Activated T-helper 2 cell treated with anti-CD3 and anti-CD28 coated beads, Interferon-gamma antibody, Interleukin-2, Interleukin-4, amounts not matched to agents 10 μg/mL and 5 μg/mL and 100 μg/mL, durations not matched to agents 14 hours and 24 hours and 36 hours (primary cell): ENCODE measurements at regions of chr6 and their contacts with region 1.

Region 1: GRCh38 chr6:131627724-131628682 is at the start of gene MED23:
- DNase-seq: peak; percentile 92
- H3K4me3 Mint-ChIP-seq: peak within 1 kb of the TSS; percentile 97
- H3K27ac Mint-ChIP-seq: peak within 1 kb of the TSS; percentile 90
- H3K4me1 Mint-ChIP-seq: peaks cover 21% of the 10 kb centered on the region
- H3K27me3 Mint-ChIP-seq: no peaks in the 10 kb centered on the region
- total RNA-seq, gene MED23: 40.4 and 43.6 TPM in 2 replicates

Region 2: DNA sequence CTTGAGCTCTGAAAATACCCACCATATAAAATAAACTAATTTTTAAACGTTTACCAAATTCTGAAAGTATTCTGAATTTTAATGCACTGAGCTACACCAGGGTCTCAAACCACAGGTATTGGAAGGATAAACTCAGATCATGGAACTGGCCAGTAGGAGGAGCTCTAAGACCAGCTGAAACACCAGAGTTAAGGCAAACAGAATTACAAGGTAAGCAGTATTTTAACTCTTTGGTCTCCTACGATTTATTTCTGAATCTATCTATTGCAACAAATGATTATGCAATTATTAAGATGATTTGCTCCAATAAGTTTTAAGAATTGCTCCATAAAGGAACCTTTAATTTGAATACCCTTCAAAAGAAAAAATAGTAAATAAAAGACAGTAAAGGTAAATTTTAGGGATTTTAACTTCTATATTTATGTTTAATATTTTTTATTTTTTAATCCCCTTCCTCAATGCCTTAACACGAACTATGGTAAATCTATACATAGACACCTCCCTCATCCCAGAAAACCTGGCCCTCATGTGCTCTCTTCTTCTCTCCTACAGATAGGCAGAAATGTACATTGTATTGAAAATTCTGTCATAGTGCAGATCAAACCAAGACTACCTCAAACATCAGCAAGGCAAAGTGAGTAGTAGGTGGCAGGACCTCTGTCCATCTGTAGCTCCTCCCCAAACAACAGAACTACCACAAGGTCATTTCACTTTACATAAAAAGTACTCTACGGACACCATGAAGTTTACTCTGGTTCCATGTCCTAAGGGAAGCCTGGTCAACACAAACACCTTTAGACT is 742.4 kb before region 1 on chr6:
- intact Hi-C with region 1: loop called (anchors 5 kb)
- DNase-seq: peak; percentile 35
- H3K4me3 Mint-ChIP-seq: no peak overlapping the region
- H3K27ac Mint-ChIP-seq: no peak overlapping the region
- H3K4me1 Mint-ChIP-seq: no peaks in the 10 kb centered on the region
- H3K27me3 Mint-ChIP-seq: peaks cover 1% of the 10 kb centered on the region

Region 3: DNA sequence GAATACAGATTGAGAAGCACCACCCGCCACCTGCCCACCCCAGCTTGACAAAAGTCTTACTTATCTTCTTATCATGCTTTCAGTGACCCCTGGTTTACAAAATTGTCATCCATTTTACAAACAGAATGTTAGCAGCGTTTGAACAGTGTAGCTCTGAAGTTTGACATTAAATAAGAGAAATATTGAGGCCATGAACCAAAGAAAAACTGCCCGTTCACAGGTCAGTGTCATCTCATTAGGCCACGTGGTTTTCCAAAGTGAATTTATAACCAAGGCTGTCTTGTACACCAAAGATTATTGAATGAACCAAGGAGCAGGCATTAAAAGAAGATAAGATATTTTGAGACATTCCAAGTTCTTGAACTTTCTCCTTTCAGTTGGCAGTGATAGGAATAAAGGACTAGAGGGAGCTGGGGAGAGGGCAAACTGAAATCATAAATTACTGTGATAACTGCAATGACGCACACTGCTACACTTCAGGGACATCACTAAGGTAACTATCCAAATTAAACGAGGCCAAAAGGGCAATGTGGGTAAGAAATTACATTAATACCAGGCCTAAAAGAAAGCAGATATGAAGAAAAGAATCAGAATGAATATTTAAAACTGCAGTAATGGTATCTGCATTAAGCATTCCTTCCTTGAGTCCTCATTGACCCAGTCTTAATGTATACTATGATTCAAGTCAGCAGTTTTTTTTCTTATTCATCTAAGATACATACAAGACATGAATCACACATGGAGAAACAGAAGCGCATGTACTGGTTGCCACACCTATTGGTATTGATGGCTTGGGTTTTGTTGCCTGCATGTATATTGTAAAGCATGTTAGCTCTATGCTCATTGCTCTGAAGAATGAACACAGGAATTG is 214.8 kb before region 1 on chr6:
- intact Hi-C with region 1: no loop called
- DNase-seq: no peak
- H3K4me3 Mint-ChIP-seq: no peak overlapping the region
- H3K27ac Mint-ChIP-seq: no peak overlapping the region
- H3K4me1 Mint-ChIP-seq: peaks cover 20% of the 10 kb centered on the region
- H3K27me3 Mint-ChIP-seq: no peaks in the 10 kb centered on the region

Region 4: DNA sequence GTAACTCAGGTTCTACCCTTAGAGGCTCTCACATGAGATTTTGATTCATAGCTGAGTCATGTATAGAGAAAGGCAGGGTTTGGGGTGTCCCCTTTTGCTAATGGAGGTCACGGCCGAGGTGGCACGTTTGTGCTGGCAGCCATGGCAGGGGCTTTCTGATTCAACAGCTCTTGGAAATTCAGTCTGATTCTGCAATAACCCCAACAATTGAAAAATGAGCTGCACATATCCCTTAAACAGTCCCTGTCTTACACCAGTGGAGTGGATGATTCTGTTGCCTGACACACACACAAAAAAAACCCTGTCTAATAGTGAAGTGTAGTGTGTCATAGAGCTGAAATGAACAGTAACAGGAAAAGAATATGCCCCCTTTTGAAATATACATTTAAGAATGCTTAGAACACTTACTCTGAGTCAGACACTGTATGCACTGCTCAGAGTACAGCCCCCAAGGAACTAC is 95.4 kb before region 1 on chr6:
- intact Hi-C with region 1: loop called (anchors 5 kb)
- DNase-seq: no peak
- H3K4me3 Mint-ChIP-seq: no peak overlapping the region
- H3K27ac Mint-ChIP-seq: peak overlapping the region; percentile 48
- H3K4me1 Mint-ChIP-seq: peaks cover 42% of the 10 kb centered on the region
- H3K27me3 Mint-ChIP-seq: peaks cover 2% of the 10 kb centered on the region

Region 5: GRCh38 chr6:131640100-131640499 is 12.1 kb after region 1 on chr6:
- intact Hi-C with region 1: loop called (anchors 1 kb)
- DNase-seq: no peak
- H3K4me3 Mint-ChIP-seq: peak overlapping the region; percentile 53
- H3K27ac Mint-ChIP-seq: peak overlapping the region; percentile 86
- H3K4me1 Mint-ChIP-seq: peaks cover 26% of the 10 kb centered on the region
- H3K27me3 Mint-ChIP-seq: no peaks in the 10 kb centered on the region

Region 6: GRCh38 chr6:131694831-131695426 is 66.9 kb after region 1 on chr6:
- intact Hi-C with region 1: no loop called
- DNase-seq: no peak
- H3K4me3 Mint-ChIP-seq: no peak overlapping the region
- H3K27ac Mint-ChIP-seq: no peak overlapping the region
- H3K4me1 Mint-ChIP-seq: peaks cover 21% of the 10 kb centered on the region
- H3K27me3 Mint-ChIP-seq: no peaks in the 10 kb centered on the region

Region 7: DNA sequence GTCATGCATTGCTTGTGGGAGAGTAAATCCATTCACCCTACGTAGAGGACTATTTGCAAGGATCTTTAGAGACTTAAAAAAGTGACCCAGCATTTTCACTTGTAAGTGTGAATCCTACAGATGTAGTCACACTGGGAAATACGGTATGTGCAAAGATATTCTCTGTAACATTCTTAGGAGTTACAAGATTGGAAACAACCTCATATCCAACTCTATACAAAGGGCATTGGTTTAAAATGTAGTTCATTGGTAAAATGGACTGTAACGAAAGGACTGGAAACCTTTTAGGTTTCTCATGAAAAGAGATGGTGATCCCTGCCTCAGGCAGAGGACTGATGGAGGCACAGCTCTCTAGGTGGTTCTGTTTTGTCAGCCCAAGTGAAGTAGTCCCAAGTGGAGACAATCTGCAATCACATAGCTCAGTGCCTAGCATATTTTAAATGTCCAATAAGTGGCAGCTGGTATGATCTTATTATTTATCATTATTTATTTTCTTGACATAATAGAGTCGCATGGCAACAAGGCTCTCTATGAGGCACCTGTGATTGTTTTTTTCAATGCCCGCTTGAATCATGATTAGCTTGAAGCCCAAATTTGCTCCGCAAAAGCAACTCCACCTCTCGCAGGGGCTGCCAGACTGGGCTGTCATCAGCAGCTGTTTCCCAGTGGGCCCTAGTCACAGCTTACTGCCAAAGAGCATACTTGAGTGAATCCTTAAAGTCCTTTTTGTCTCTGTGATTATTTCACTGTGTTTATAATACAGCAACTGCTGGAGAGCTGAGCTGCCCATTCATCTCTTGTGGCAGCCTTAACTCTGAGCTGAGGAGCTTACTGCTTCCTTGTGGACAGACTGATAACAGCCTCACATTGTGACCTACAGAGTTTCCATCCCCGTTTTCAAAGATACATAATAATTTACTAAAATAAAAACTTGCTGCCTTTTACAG is 160.0 kb after region 1 on chr6:
- intact Hi-C with region 1: loop called (anchors 1 kb)
- DNase-seq: no peak
- H3K4me3 Mint-ChIP-seq: no peak overlapping the region
- H3K27ac Mint-ChIP-seq: no peak overlapping the region
- H3K4me1 Mint-ChIP-seq: peaks cover 37% of the 10 kb centered on the region
- H3K27me3 Mint-ChIP-seq: no peaks in the 10 kb centered on the region

Region 8: GRCh38 chr6:131909408-131910218 is 281.6 kb after region 1 on chr6:
- intact Hi-C with region 1: loop called (anchors 1 kb)
- DNase-seq: peak; percentile 66
- H3K4me3 Mint-ChIP-seq: no peak overlapping the region
- H3K27ac Mint-ChIP-seq: peak overlapping the region; percentile 67
- H3K4me1 Mint-ChIP-seq: peaks cover 30% of the 10 kb centered on the region
- H3K27me3 Mint-ChIP-seq: peaks cover 29% of the 10 kb centered on the region